Gastrocnemius medialis (tissue), 4 donors: ENCODE measurements at regions of chr10 and their contacts with region 1.

Region 1: DNA sequence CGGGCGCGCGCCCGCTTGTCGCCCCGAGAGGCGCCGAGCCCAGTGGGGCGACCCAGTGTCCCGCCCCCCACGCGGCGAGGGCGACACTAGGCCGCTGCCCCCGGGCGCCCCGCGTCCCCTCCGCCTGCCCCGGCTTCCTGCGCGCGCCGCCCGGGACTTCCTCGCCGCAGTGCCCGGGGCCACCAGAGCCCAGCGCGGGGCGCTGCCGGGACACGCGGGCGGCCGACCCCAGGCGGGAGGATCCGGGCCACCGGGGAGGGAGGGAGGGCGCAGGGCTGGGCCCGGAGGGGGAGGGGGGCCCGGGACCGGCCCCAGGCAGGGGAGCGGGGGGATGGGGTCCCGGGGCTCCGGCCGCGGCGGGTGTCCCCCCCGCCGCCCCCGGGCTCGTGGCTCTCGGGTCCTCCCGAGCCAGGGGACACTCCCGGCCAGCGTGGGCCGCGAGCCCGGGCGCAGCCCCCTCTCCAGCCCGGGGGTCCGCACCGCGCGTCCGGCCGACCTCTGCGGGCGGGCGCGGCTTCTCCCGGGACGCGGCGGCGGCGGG is 435 bp upstream of the PWWP2B start:
- DNase-seq: peak in 1 of 2 donors; percentile 70
- ATAC-seq: peak; percentile 58 to 59
- H3K4me3 ChIP-seq: peak overlapping the region; percentile 69 to 72 (median 71)
- H3K27ac ChIP-seq: peak overlapping the region; percentile 88 to 98 (median 96)
- H3K4me1 ChIP-seq: peaks cover 19 to 38% of the 10 kb centered on the region in 2 donors
- H3K27me3 ChIP-seq: no peaks in the 10 kb centered on the region
- CTCF ChIP-seq: peak in 4 of 5 experiments; percentile 27 to 67 (median 50)
- POLR2A ChIP-seq: peak in 1 of 2 donors; percentile 74

Region 2: DNA sequence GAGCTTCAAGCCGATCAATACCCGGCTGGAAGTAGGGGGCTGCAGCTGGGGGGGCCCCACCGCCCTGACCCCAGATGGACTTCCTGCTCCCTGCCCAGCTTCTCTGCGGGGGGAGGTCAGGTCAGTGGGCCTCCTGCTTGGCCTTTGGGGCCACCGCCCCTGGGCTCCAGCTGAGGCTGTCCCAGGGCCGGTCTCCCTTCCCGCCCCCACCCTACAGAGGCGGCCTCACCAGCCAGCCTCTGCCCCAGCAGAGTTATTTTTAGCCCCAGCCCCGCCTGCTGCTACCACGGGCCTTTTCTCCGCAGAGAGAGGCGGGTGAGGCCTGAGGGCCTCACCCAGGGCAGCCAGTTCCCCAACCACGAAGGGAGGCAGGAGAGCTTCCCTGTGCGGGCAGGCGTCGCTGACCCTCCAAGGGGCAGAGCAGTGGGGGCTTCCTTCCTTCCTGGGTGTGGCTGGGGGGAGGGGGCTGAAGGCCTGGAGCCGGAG is 24.9 kb after region 1 on chr10:
- in situ Hi-C with region 1: no loop called
- intact Hi-C with region 1: loop called (anchors 2 kb)
- DNase-seq: peak; percentile 77 to 82
- ATAC-seq: peak; percentile 64 to 79
- H3K4me3 ChIP-seq: peak overlapping the region; percentile 32 to 37 (median 33)
- H3K27ac ChIP-seq: peak overlapping the region; percentile 85 to 91 (median 88)
- H3K4me1 ChIP-seq: peaks cover 55 to 63% of the 10 kb centered on the region in 2 donors
- H3K27me3 ChIP-seq: no peaks in the 10 kb centered on the region
- CTCF ChIP-seq: no peak
- POLR2A ChIP-seq: peak; percentile 30 to 38

Region 3: GRCh38 chr10:132571650-132572535 is 175.3 kb after region 1 on chr10:
- in situ Hi-C with region 1: no loop called
- intact Hi-C with region 1: loop called (anchors 10 kb)
- DNase-seq: peak; percentile 73 to 87
- ATAC-seq: peak; percentile 100
- H3K4me3 ChIP-seq: no peak overlapping the region
- H3K27ac ChIP-seq: peak overlapping the region; percentile 41 to 78 (median 54)
- H3K4me1 ChIP-seq: peaks cover 34 to 46% of the 10 kb centered on the region in 2 donors
- H3K27me3 ChIP-seq: no peaks in the 10 kb centered on the region
- CTCF ChIP-seq: no peak
- POLR2A ChIP-seq: no peak

Region 4: GRCh38 chr10:132627666-132628531 is 231.3 kb after region 1 on chr10:
- in situ Hi-C with region 1: loop called in 3 of 4 experiments (anchors 25 kb)
- intact Hi-C with region 1: loop called (anchors 5 kb)
- DNase-seq: peak; percentile 47 to 56
- ATAC-seq: peak; percentile 1 to 41
- H3K4me3 ChIP-seq: peak overlapping the region in 3 of 4 donors; percentile 13 to 38 (median 24)
- H3K27ac ChIP-seq: peak overlapping the region; percentile 90 to 99 (median 92)
- H3K4me1 ChIP-seq: peaks cover 61 to 66% of the 10 kb centered on the region in 2 donors
- H3K27me3 ChIP-seq: no peaks in the 10 kb centered on the region
- CTCF ChIP-seq: no peak
- POLR2A ChIP-seq: no peak